H1 (cell line): ENCODE measurements at regions of chr12 and their contacts with region 1.

Region 1: GRCh38 chr12:130863298-130863697 is 8.6 kb upstream of the RAN start:
- DNase-seq: no peak
- H3K4me3 ChIP-seq: no peak overlapping the region
- H3K27ac ChIP-seq: no peak overlapping the region
- H3K4me1 ChIP-seq: no peaks in the 10 kb centered on the region
- H3K27me3 ChIP-seq: no peaks in the 10 kb centered on the region
- CTCF ChIP-seq: peak; percentile 23 to 46 (median 37); a peak in 3 of 4 replicates
- EP300 ChIP-seq: no peak
- POLR2A ChIP-seq: no peak
- RAD21 ChIP-seq: no peak

Region 2: DNA sequence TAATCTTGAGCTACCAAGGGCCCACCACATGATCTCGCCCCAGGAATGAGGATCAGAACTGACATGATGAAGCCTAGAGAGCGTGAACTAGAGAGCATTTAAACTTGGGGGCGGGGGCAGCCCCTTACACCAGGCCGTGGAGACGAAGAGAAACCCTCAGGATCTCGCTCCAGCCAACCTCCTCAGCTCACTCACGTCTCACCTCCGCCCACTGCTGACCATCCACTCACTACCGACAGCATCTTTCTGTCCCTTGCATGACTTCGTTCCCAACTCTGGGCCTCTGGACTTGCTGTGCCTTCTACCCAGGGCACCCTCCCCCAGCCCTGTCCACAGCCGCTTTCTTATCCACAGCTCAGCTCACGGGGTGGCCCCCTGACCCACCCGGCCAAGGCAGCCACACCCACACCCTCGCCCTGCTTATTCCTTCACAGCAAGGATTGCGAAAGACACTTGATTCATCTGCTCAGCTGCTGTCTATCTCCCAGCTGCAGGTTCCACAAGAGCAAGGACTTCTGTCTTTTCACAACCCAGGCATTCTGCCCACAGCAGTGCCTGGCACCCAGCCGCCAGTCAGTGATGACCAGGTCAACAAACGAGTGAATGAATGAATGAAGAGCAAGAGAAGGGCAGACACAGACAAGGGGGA is 30.6 kb before region 1 on chr12:
- CTCF ChIA-PET with region 1: interaction called, 33 read pairs
- POLR2A ChIA-PET with region 1: interaction called, 8 read pairs
- DNase-seq: no peak
- H3K4me3 ChIP-seq: no peak overlapping the region; a peak in 1 of 8 replicates
- H3K27ac ChIP-seq: no peak overlapping the region
- H3K4me1 ChIP-seq: peaks cover 5 to 24% (median 13%) of the 10 kb centered on the region in 4 experiments
- H3K27me3 ChIP-seq: no peaks in the 10 kb centered on the region
- CTCF ChIP-seq: no peak
- EP300 ChIP-seq: no peak
- POLR2A ChIP-seq: no peak
- RAD21 ChIP-seq: no peak

Region 3: GRCh38 chr12:130849561-130850417 is 13.5 kb before region 1 on chr12:
- CTCF ChIA-PET with region 1: interaction called, 11 read pairs
- POLR2A ChIA-PET with region 1: interaction called, 33 read pairs
- DNase-seq: no peak
- H3K4me3 ChIP-seq: peak overlapping the region in 1 of 4 experiments; percentile 18; a peak in 2 of 8 replicates
- H3K27ac ChIP-seq: peak overlapping the region; percentile 44
- H3K4me1 ChIP-seq: peaks cover 9 to 13% (median 10%) of the 10 kb centered on the region in 4 experiments; a peak in 6 of 7 replicates
- H3K27me3 ChIP-seq: no peaks in the 10 kb centered on the region
- CTCF ChIP-seq: no peak
- EP300 ChIP-seq: peak in 1 of 2 experiments; percentile 22; a peak in 1 of 3 replicates
- POLR2A ChIP-seq: no peak
- RAD21 ChIP-seq: no peak